BJ (cell line): ENCODE measurements at regions of chr22 and their contacts with region 1.

Region 1: GRCh38 chr22:43042101-43042780 is 27.3 kb upstream of the PACSIN2 start:
- DNase-seq: no peak
- H3K4me3 ChIP-seq: no peak overlapping the region
- H3K27me3 ChIP-seq: no peaks in the 10 kb centered on the region
- CTCF ChIP-seq: no peak

Region 2: GRCh38 chr22:42814215-42814614 is 228.0 kb before region 1 on chr22:
- CTCF ChIA-PET with region 1: no interaction called
- POLR2A ChIA-PET with region 1: no interaction called
- DNase-seq: no peak
- H3K4me3 ChIP-seq: no peak overlapping the region
- H3K27me3 ChIP-seq: no peaks in the 10 kb centered on the region
- CTCF ChIP-seq: no peak

Region 3: DNA sequence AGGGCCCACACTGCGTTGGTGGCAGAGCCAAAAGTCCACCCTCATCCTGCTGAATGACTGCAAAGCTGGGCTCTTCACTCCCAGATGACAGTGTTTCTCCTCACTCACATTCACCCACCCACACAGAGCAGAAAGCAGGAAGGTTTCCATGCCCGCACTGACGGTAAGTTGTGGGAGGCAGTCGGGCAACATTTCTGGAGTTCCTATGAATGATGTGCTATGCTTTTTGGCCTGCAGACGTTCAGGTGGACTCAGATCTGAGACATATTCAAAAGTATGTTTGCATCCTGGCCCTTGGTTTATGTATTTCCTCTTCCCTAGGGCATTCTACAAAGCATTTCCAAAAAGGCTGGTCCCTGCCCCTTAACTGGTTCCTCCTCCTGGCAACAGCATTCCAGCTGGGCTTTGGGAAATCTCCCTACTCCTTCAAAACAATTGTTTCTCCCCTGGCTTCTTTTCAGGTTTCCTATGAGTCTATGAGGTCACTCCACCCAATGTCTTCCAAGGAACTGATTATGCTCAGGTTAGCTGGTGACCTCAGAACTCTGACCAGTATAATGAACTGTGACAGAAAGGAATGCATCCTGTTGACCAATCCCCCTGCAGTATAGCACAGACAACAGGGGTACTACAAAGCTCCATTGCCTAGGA is 63.7 kb before region 1 on chr22:
- CTCF ChIA-PET with region 1: no interaction called
- POLR2A ChIA-PET with region 1: interaction called, 12 read pairs
- DNase-seq: no peak
- H3K4me3 ChIP-seq: no peak overlapping the region
- H3K27me3 ChIP-seq: no peaks in the 10 kb centered on the region
- CTCF ChIP-seq: no peak

Region 4: GRCh38 chr22:43007519-43008102 is 34.6 kb before region 1 on chr22:
- CTCF ChIA-PET with region 1: no interaction called
- POLR2A ChIA-PET with region 1: no interaction called
- DNase-seq: no peak
- H3K4me3 ChIP-seq: no peak overlapping the region
- H3K27me3 ChIP-seq: no peaks in the 10 kb centered on the region
- CTCF ChIP-seq: no peak

Region 5: GRCh38 chr22:43244402-43244801 is 202.2 kb after region 1 on chr22:
- CTCF ChIA-PET with region 1: no interaction called
- POLR2A ChIA-PET with region 1: no interaction called
- DNase-seq: no peak
- H3K4me3 ChIP-seq: no peak overlapping the region
- H3K27me3 ChIP-seq: peaks cover 5% of the 10 kb centered on the region
- CTCF ChIP-seq: no peak